Activated CD4-positive, alpha-beta T cell treated with anti-CD3 and anti-CD28 coated beads for 36 hours (primary cell): ENCODE measurements at regions of chr19 and their contacts with region 1.

Region 1: DNA sequence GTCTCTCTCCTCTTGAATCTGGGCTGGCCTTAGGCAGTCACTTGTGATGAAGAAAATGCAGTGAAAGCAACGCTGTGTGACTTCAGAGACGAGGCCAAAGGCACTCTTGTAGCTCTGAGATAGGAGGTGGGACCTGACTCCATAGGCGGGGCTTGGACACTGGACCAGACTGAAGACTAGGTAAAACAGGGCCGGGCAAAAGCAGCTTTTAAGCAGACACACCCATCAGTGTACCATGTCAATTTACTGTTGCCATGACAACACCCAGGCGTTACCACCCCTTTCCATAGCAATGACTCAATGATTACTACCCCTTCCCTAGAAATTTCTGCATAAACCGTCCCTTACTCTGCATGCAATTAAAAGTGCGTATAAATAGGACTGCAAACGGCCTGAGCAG is 6.6 kb upstream of the EID2 start:
- DNase-seq: peak; percentile 26
- ATAC-seq: no peak
- H3K4me3 Mint-ChIP-seq: no peak overlapping the region
- H3K27ac Mint-ChIP-seq: no peak overlapping the region
- H3K4me1 Mint-ChIP-seq: peaks cover 41% of the 10 kb centered on the region
- H3K27me3 Mint-ChIP-seq: no peaks in the 10 kb centered on the region

Region 2: DNA sequence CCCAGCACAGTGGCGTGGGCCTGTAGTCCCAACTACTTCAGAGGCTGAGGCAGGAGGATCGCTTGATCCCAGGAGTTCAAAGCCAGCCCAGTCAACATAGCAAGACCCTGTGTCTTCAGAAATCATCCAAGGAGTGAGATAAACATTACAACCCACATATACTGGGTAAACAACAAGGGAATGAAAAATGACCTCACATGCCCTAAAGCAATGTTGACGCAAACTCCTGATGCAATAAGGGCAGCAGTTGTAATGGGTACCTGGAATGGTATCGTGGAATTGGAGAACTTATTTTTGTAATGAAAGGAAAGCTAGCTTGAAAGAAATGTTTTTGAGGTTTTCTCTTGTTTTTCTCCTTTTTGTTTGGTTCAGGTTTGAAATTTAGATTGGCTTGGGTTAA is 84.6 kb after region 1 on chr19:
- CTCF ChIA-PET with region 1: interaction called, 3 read pairs
- POLR2A ChIA-PET with region 1: no interaction called
- intact Hi-C with region 1: loop called (anchors 1 to 5 kb)
- DNase-seq: no peak
- ATAC-seq: no peak
- H3K4me3 Mint-ChIP-seq: no peak overlapping the region
- H3K27ac Mint-ChIP-seq: no peak overlapping the region
- H3K4me1 Mint-ChIP-seq: peaks cover under 1% of the 10 kb centered on the region
- H3K27me3 Mint-ChIP-seq: peaks cover 25% of the 10 kb centered on the region

Region 3: DNA sequence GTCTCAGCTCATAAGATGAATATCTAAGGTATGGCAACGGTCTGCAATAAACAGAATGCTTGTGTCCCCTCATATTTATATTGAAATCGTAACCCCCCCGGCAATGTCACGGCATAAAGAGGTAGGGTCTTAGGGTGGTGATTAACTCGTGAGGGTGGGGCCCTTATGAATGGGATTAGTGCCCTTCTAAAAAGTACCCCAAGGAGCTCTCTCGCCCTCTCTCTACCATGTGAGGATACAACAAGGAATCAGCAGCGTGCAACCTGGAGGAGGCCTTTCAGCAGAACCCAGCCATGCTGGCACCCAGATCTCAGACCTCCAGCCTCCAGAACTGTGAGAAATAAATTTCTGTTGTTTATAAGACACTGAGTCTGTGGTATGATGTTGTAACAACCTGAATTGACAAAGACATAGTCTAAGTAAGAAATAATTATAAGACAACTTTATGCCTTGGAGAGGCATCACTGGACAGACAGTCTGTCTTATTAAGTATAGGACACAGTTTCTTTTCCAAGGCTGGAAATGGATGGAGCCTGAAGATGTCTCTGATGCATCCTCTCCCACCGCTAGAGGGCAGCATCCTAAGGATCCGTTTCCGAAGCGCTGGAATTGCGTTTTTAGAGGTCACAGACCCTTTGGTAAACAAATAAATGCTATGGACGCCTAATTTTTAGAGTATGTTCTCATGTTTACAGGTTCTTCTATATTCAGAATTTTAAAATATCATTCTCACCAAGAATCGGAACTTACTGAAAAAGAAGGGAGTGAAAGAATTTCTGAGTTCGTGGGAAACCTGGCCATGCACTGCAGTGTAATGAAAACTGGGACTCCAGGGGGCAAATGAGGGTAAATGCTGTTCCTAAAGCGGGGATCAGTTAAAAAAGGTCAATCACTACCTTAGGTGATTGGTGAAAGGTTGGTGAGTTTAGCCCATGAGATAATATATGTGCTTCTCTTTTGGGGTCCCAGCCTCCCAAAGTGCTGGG is 218.8 kb after region 1 on chr19:
- CTCF ChIA-PET with region 1: interaction called, 4 read pairs
- POLR2A ChIA-PET with region 1: no interaction called
- intact Hi-C with region 1: loop called (anchors 1 to 10 kb)
- DNase-seq: peak; percentile 63
- ATAC-seq: no peak
- H3K4me3 Mint-ChIP-seq: no peak overlapping the region
- H3K27ac Mint-ChIP-seq: no peak overlapping the region
- H3K4me1 Mint-ChIP-seq: no peaks in the 10 kb centered on the region
- H3K27me3 Mint-ChIP-seq: peaks cover 21% of the 10 kb centered on the region